PC-3 (cell line): ENCODE measurements at regions of chr20 and their contacts with region 1.

Region 1: DNA sequence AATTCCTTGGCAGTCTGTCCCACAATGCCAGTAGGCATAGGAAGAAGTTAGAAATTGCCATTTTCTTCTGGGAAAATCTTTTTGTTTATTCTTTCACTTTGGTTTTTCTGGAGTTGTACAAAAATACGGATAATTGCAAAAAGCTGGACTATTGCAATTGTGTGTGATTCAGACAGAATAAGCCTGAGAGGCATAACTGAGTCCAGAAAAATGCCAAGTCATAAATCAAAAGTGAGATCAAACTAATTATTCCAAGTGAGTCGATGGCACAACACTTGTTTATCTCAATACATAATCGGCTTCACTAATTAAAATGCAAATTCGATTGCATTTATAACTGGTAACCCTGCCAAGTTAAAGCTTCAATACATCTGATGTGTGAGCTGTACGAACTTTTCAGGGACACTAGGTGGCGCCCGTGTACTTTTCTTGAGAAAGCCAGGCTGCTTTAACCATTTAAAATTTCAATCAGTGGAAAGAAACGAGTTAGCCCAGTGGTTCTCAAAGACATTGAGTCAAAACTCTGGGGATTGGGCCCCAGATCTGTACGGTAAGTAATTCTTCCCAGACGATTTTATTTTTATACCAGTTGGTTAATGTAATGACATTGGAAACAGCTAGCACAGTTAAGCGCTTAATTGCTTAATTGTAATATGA is 102.6 kb downstream of the LAMP5 start:
- DNase-seq: peak; percentile 89
- ATAC-seq: peak; percentile 74
- H3K4me3 ChIP-seq: peak overlapping the region; percentile 28
- H3K27ac ChIP-seq: no peak overlapping the region
- H3K4me1 ChIP-seq: no peaks in the 10 kb centered on the region; the same call in 1 of the 2 replicates
- H3K27me3 ChIP-seq: peaks cover 12% of the 10 kb centered on the region; the same call in 1 of the 2 replicates
- CTCF ChIP-seq: peak; percentile 97

Region 2: DNA sequence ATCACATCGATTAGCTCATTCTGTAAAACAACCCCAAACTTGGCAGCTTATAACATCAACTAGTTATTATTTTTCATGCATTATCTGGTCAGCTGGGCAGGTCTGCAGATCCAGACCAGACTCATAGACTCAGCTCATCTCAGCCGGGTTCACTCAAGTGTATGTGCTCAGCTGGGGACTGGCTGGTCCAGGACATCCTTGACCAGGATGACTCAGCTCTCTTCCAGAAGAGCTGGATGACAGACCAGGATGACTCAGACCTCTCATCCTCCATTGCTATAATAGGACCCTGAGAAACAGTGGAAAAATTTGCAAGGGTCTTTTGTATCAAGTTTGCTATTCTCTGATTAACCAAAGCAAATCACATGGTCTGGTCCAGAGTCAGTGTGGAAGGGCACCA is 860.6 kb before region 1 on chr20:
- CTCF ChIA-PET with region 1: no interaction called
- POLR2A ChIA-PET with region 1: no interaction called
- intact Hi-C with region 1: loop called (anchors 10 kb)
- DNase-seq: peak; percentile 77
- ATAC-seq: peak; percentile 94
- H3K4me3 ChIP-seq: no peak overlapping the region
- H3K27ac ChIP-seq: no peak overlapping the region
- H3K4me1 ChIP-seq: no peaks in the 10 kb centered on the region; the same call in 1 of the 2 replicates
- H3K27me3 ChIP-seq: no peaks in the 10 kb centered on the region
- CTCF ChIP-seq: no peak

Region 3: DNA sequence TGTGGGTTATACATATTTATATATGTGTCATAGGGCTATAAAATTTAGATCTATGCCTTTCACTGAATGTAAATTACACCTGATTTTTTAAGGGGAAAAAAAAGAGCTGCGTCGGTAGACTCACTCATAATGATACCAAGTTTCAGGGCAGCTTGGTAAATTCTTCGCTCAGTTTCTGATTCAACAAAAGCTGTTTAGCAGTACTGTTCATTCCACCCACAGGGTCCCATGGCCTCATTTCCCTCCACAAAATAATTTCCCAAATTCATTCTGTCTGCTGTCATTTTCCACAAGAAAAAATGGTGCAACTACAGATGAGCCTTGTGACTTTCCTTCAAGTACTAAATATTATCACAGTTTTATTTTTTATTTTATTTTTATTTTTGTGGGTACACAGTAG is 158.2 kb after region 1 on chr20:
- CTCF ChIA-PET with region 1: interaction called, 11 read pairs
- POLR2A ChIA-PET with region 1: no interaction called
- intact Hi-C with region 1: no loop called
- DNase-seq: no peak
- ATAC-seq: no peak
- H3K4me3 ChIP-seq: no peak overlapping the region
- H3K27ac ChIP-seq: no peak overlapping the region
- H3K4me1 ChIP-seq: no peaks in the 10 kb centered on the region
- H3K27me3 ChIP-seq: peaks cover 43% of the 10 kb centered on the region
- CTCF ChIP-seq: no peak

Region 4: GRCh38 chr20:9912858-9913434 is 296.0 kb after region 1 on chr20:
- CTCF ChIA-PET with region 1: interaction called, 22 read pairs
- POLR2A ChIA-PET with region 1: no interaction called
- intact Hi-C with region 1: loop called (anchors 1 kb)
- DNase-seq: peak; percentile 80
- ATAC-seq: peak; percentile 59
- H3K4me3 ChIP-seq: no peak overlapping the region
- H3K27ac ChIP-seq: no peak overlapping the region
- H3K4me1 ChIP-seq: no peaks in the 10 kb centered on the region
- H3K27me3 ChIP-seq: peaks cover 45% of the 10 kb centered on the region
- CTCF ChIP-seq: peak; percentile 94

Region 5: DNA sequence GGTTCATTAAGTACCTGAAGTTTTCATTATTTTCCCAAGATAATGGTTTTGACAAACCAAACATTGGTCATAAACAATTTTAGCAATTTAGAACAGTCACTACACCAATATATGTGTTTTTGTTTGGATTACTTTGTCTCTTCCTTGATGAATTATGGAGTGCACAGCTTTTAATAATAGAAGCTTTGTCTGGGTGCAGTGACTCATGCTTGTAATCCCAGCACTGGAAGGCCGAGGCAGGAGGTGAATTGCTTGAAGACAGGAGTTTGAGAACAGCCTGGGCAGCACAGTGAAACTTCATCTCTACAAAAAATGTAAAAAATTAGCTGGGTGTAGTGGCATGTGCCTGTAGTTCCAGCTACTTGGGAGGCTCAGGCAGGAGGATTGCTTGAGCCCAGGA is 328.4 kb after region 1 on chr20:
- CTCF ChIA-PET with region 1: no interaction called
- POLR2A ChIA-PET with region 1: no interaction called
- intact Hi-C with region 1: no loop called
- DNase-seq: peak; percentile 86
- ATAC-seq: peak; percentile 99
- H3K4me3 ChIP-seq: no peak overlapping the region
- H3K27ac ChIP-seq: peak overlapping the region; percentile 74
- H3K4me1 ChIP-seq: peaks cover 15% of the 10 kb centered on the region
- H3K27me3 ChIP-seq: no peaks in the 10 kb centered on the region
- CTCF ChIP-seq: no peak

Region 6: DNA sequence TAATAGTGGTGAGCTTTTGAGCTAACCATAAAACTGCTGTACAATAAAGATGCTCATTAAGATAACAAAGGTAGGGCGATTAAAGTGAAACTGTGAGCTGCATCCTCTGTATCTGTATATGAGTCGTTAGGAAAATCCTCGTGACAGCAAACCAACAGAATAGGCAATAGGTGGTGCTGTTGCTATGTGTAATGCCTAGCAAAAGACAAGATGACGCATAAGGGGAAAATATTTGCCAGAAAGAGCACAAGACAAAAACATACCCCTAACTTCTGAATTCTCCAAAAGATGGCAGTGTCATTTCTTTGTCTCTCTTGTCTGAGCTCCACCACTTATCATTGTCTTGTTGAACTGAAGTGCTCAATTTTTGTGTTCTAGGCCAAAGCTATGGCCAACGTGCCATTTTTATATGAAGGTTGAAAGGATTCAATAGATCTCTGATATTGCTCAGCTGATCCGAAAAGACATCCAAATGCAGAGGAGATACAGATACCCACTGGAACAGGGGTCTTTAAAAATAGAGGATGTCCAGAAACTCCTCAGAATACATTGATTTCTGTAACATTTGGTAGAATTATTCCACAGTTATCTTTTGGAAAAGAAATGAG is 361.5 kb after region 1 on chr20:
- CTCF ChIA-PET with region 1: interaction called, 14 read pairs
- POLR2A ChIA-PET with region 1: no interaction called
- intact Hi-C with region 1: no loop called
- DNase-seq: peak; percentile 92
- ATAC-seq: peak; percentile 92
- H3K4me3 ChIP-seq: peak overlapping the region; percentile 34; the same call in 1 of the 2 replicates
- H3K27ac ChIP-seq: no peak overlapping the region
- H3K4me1 ChIP-seq: no peaks in the 10 kb centered on the region
- H3K27me3 ChIP-seq: peaks cover 26% of the 10 kb centered on the region
- CTCF ChIP-seq: peak; percentile 98

Region 7: DNA sequence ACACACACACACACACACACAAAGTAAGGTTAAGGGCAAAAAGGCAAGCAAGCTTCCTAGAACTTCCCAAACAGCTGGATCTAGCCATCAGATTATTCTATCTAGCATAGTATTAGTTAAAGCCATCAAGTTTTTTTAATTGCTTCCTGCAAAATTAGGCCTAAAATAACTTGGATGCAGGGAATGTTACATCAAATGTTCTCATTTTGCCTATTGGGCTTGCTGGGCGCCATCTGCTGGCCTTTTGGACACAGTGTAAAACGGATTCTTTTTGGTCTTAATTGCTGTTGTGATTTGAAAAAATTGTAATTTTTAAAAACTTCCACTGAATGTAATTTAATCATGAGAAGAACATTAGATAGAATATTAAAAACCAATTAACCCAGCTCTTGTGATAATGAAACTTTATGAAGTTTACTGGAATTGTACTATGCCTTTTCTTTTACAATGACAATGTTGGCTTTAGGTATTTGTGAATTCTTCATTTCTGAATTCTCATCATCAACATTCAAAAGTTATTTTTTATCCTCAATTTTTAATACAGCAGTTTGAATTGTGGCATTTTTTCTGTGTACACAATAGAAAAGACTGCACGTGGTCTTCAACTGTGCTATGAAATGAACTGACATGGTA is 810.2 kb after region 1 on chr20:
- CTCF ChIA-PET with region 1: interaction called, 6 read pairs
- POLR2A ChIA-PET with region 1: no interaction called
- intact Hi-C with region 1: loop called (anchors 5 kb)
- DNase-seq: peak; percentile 67
- ATAC-seq: peak; percentile 60; the same call in 1 of the 2 replicates
- H3K4me3 ChIP-seq: no peak overlapping the region
- H3K27ac ChIP-seq: no peak overlapping the region
- H3K4me1 ChIP-seq: peaks cover 24% of the 10 kb centered on the region
- H3K27me3 ChIP-seq: no peaks in the 10 kb centered on the region
- CTCF ChIP-seq: peak; percentile 96